ENCODE measurements at regions of chr6 and their contacts with region 1.

Region 1: GRCh38 chr6:14066782-14067406 is 50.7 kb upstream of the CD83 start:
- DNase-seq: peak; percentile 55
- H3K4me3 ChIP-seq: no peak overlapping the region
- H3K27ac ChIP-seq: no peak overlapping the region
- H3K27me3 ChIP-seq: no peaks in the 10 kb centered on the region
- CTCF ChIP-seq: peak; percentile 64

Region 2: DNA sequence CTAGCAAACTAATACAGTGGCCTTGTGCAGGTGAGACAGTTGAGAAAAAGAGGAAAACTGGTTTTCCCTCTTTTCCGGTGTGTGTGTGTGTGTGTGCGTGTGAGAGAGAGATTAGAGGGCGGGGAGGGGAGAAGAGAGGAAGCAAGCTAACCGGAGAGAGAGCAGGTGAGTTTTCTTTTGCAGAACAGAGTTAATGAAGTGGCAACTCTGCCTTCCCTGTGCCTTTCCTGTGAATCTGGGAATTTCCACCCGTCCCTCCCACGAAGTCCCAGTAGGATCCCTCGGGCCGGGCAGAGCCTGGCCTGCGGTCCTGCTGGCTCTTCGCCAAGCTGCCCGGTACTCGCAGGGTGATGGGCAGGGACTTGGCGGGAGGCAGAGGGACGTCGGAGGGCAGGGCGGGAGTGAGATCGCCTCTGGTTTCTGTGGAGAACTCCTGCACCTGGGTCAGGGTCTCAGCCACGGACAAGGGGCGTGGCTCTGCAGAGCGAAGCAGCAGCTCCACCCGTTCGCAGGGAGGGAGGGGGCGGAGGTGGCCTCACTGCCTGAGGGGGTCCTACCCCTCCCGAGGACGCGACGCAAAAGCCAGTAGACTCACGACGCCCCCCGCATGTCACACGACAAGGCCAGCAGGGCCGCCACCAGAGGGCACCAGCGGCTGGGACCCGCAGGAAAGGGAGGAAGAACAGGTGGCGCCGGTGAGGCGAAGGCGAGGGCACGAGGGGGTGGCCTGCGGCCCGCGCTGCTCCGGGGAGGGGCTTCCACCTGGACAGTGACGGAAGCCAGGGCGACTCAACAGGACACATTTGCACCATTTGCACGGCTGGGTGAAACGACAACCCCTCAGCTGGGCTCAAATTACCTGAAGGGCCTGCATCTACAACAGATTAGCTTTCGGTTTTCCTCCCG is 193.4 kb before region 1 on chr6:
- CTCF ChIA-PET with region 1: interaction called, 22 read pairs
- POLR2A ChIA-PET with region 1: no interaction called
- DNase-seq: no peak
- H3K4me3 ChIP-seq: peak overlapping the region; percentile 59
- H3K27ac ChIP-seq: no peak overlapping the region
- H3K27me3 ChIP-seq: peaks cover 15% of the 10 kb centered on the region
- CTCF ChIP-seq: peak; percentile 67

Region 3: DNA sequence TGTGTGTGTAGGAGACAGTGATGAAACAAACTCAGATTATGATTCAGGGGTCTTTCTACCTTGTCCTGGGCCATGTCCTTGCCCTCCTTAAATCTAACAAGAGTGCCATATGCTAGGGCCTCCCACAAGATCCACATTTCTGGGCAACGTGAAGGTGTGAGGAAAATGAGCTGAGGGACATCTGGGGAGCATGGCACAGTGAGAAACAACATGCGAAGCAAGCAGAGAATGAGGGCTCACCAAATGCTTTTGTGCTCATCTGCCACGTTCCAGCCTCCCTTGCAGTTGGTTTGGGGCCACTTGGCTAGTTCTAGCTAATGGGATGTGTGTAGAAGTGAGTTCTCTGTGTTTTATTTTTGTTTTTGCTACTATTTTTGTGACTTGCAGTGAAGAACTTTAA is 163.5 kb before region 1 on chr6:
- CTCF ChIA-PET with region 1: interaction called, 501 read pairs
- POLR2A ChIA-PET with region 1: no interaction called
- DNase-seq: no peak
- H3K4me3 ChIP-seq: no peak overlapping the region
- H3K27ac ChIP-seq: no peak overlapping the region
- H3K27me3 ChIP-seq: peaks cover 14% of the 10 kb centered on the region
- CTCF ChIP-seq: no peak

Region 4: DNA sequence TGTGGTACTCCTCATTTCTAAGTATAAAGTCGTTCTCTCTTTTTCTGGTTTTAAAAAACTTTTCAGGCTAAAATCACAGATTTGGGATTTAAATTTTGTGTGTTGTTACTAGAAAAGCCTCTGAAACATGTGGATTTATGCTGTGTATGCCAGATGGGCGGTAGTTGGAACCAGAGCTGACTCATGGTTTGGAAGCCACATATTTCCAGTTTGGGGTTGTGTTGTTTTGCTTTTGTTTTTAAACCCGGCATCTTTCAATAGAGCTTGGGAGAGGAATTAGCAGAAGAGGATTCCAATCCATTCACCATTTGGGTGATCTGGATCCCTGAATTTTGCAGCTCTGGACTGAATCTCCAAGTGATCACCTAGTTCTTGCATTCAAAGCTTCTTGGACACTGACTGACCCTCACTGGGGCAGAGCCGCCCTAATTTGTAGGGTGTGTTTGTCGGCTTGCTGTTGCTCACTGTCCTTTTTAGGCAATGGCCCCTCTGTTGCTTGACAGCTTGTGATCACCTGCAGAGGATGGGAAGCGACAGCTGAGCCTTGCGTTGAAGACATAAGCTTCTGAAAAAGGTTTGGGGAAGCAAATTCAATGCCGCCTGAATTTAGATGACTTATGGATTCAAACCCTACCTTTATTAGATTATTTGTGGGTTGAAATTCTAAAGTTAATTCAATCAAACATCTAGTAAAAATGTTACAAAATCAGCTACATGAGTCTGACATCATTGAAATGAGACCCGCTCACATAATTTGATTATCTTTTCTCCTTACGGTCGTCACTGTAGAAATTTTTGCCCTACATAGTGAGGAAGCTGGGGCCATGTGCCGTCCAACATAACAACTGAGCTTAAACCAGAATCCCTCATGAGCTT is 29.3 kb before region 1 on chr6:
- CTCF ChIA-PET with region 1: interaction called, 46 read pairs
- POLR2A ChIA-PET with region 1: interaction called, 5 read pairs
- DNase-seq: peak; percentile 52
- H3K4me3 ChIP-seq: no peak overlapping the region
- H3K27ac ChIP-seq: peak overlapping the region; percentile 83
- H3K27me3 ChIP-seq: no peaks in the 10 kb centered on the region
- CTCF ChIP-seq: no peak

Region 5: DNA sequence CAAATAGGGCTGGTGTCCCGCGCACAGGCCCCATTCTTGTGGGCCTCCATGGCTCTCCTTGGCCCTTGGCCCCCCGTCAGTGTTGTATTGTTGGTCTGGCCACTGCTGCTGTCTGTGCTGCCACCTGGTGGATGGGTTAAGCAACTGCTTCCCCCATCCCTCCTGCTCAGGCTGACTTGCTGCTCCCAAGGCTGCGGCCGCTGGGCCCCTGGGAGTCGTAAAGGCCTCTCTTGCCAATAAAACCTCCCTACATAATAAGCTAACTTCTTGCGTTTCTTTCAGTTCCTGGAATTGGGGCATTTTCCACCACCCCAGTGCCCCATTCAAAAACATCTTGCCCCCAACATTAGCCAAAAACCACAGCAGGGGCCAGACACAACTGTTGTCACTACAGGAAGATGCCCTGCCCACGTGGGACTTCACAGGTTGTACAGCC is 77.8 kb after region 1 on chr6:
- CTCF ChIA-PET with region 1: interaction called, 19 read pairs
- POLR2A ChIA-PET with region 1: no interaction called
- DNase-seq: peak; percentile 27
- H3K4me3 ChIP-seq: no peak overlapping the region
- H3K27ac ChIP-seq: no peak overlapping the region
- H3K27me3 ChIP-seq: peaks cover 25% of the 10 kb centered on the region
- CTCF ChIP-seq: peak; percentile 91

Region 6: GRCh38 chr6:14897831-14898230 is 830.9 kb after region 1 on chr6:
- CTCF ChIA-PET with region 1: no interaction called
- POLR2A ChIA-PET with region 1: no interaction called
- DNase-seq: no peak
- H3K4me3 ChIP-seq: no peak overlapping the region
- H3K27ac ChIP-seq: no peak overlapping the region
- H3K27me3 ChIP-seq: no peaks in the 10 kb centered on the region
- CTCF ChIP-seq: no peak